ENCODE measurements at regions of chr10 and their contacts with region 1.

Region 1: GRCh38 chr10:62244780-62245467 is 23.7 kb downstream of the RTKN2 start:
- DNase-seq: peak; percentile 65
- ATAC-seq: peak; percentile 84
- H3K4me3 Mint-ChIP-seq: peak overlapping the region; percentile 36
- H3K27ac Mint-ChIP-seq: peak overlapping the region; percentile 87
- H3K4me1 Mint-ChIP-seq: peaks cover 35% of the 10 kb centered on the region
- H3K27me3 Mint-ChIP-seq: no peaks in the 10 kb centered on the region

Region 2: GRCh38 chr10:61896854-61897661 is 347.9 kb before region 1 on chr10:
- CTCF ChIA-PET with region 1: interaction called, 12 read pairs
- POLR2A ChIA-PET with region 1: interaction called, 4 read pairs
- intact Hi-C with region 1: loop called (anchors 2 kb)
- DNase-seq: peak; percentile 70
- ATAC-seq: peak; percentile 79
- H3K4me3 Mint-ChIP-seq: peak overlapping the region; percentile 94
- H3K27ac Mint-ChIP-seq: peak overlapping the region; percentile 93
- H3K4me1 Mint-ChIP-seq: peaks cover 39% of the 10 kb centered on the region
- H3K27me3 Mint-ChIP-seq: no peaks in the 10 kb centered on the region

Region 3: DNA sequence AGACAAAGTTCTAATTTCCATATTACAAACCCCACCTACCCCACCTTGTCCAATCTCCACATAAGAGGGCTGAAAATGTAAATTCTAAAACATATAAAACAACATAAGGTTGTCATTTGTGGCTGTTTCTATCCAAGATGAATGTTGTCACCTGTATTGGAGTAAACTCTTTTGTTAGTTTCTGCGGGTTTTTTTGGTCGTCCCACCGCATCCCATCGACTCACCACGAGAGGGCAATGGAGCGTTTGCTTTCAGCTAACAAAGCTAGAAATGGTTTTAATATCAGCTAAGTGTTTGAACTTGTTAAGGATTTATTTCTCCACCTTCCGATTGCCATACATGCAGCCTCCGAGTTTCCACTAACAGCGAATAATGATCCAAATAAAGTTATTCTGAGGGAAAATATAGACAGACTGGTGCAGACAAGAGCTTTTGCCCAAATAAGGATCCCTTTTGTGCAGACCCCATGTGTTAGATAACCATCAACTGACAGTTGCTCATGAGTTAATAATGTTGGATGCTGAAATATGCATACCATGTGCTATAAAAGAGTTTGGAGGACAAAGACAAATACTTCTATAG is 206.2 kb before region 1 on chr10:
- CTCF ChIA-PET with region 1: interaction called, 91 read pairs
- POLR2A ChIA-PET with region 1: interaction called, 9 read pairs
- intact Hi-C with region 1: loop called (anchors 1 kb)
- DNase-seq: peak; percentile 87
- ATAC-seq: peak; percentile 60
- H3K4me3 Mint-ChIP-seq: peak overlapping the region; percentile 45
- H3K27ac Mint-ChIP-seq: peak overlapping the region; percentile 92
- H3K4me1 Mint-ChIP-seq: peaks cover 87% of the 10 kb centered on the region
- H3K27me3 Mint-ChIP-seq: no peaks in the 10 kb centered on the region

Region 4: GRCh38 chr10:62063795-62064472 is 181.0 kb before region 1 on chr10:
- CTCF ChIA-PET with region 1: interaction called, 10 read pairs
- POLR2A ChIA-PET with region 1: no interaction called
- intact Hi-C with region 1: no loop called
- DNase-seq: no peak
- ATAC-seq: no peak
- H3K4me3 Mint-ChIP-seq: no peak overlapping the region
- H3K27ac Mint-ChIP-seq: peak overlapping the region; percentile 83
- H3K4me1 Mint-ChIP-seq: peaks cover 86% of the 10 kb centered on the region
- H3K27me3 Mint-ChIP-seq: no peaks in the 10 kb centered on the region

Region 5: GRCh38 chr10:62082729-62083411 is 162.1 kb before region 1 on chr10:
- CTCF ChIA-PET with region 1: interaction called, 9 read pairs
- POLR2A ChIA-PET with region 1: no interaction called
- intact Hi-C with region 1: loop called in 1 of 2 experiments (anchors 10 kb)
- DNase-seq: peak; percentile 71
- ATAC-seq: peak; percentile 78
- H3K4me3 Mint-ChIP-seq: peak overlapping the region; percentile 52
- H3K27ac Mint-ChIP-seq: peak overlapping the region; percentile 90
- H3K4me1 Mint-ChIP-seq: peaks cover 82% of the 10 kb centered on the region
- H3K27me3 Mint-ChIP-seq: no peaks in the 10 kb centered on the region

Region 6: DNA sequence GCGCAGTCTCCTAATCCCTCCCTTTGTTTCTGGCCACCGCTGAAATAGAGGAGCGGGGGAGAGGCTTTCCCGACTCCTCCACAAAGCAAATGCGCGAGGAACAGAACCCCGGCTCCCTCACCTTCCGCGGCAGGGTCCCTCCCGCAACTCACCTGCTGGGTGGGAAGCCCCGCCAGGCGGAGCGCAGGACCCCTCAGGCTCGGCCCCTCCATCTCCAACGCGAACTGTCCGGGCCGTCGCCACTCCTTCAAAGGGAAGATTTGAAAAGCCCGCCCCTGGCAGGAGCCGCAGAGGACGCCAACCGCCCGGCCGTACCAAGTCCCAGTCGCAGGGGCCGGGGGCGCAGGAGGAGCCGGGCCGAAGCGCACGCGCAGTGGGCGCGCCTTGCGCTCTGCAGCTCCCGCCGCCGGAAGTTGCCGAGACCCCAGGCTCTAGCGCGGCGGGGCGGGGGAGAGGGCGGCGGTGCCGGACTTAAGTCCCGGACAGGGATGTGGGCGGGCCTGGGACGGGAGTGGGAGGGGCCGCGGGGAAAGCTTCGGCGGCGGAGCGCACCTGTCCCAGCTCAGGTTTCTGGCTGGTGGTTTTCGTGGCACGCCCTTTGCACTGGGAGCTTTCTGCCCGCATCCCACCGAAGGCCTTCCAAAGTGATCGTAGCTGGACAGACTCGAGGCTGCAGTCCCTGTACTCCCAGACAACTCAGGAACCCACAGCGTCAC is 23.6 kb after region 1 on chr10 and contains the start of gene RTKN2:
- CTCF ChIA-PET with region 1: interaction called, 22 read pairs
- POLR2A ChIA-PET with region 1: no interaction called
- intact Hi-C with region 1: no loop called
- DNase-seq: peak; percentile 83
- ATAC-seq: peak; percentile 88
- H3K4me3 Mint-ChIP-seq: peak within 1 kb of the TSS; percentile 82
- H3K27ac Mint-ChIP-seq: peak within 1 kb of the TSS; percentile 51
- H3K4me1 Mint-ChIP-seq: peaks cover 14% of the 10 kb centered on the region
- H3K27me3 Mint-ChIP-seq: peaks cover 31% of the 10 kb centered on the region
- total RNA-seq, gene RTKN2: 4.8 TPM

Region 7: GRCh38 chr10:62284221-62284620 is 39.3 kb after region 1 on chr10:
- CTCF ChIA-PET with region 1: no interaction called
- POLR2A ChIA-PET with region 1: no interaction called
- intact Hi-C with region 1: no loop called
- DNase-seq: no peak
- ATAC-seq: no peak
- H3K4me3 Mint-ChIP-seq: no peak overlapping the region
- H3K27ac Mint-ChIP-seq: no peak overlapping the region
- H3K4me1 Mint-ChIP-seq: no peaks in the 10 kb centered on the region
- H3K27me3 Mint-ChIP-seq: peaks cover 7% of the 10 kb centered on the region

Measured in activated CD4-positive, alpha-beta T cell treated with anti-CD3 and anti-CD28 coated beads for 36 hours (primary cell).